Motor neuron (in vitro differentiated cells): ENCODE measurements at regions of chr11 and their contacts with region 1.

Region 1: GRCh38 chr11:85699957-85700741 is 14.2 kb upstream of the CCDC89 start:
- ATAC-seq: peak in 2 of 8 experiments; percentile 14 to 32
- H3K4me3 ChIP-seq: no peak overlapping the region
- H3K27ac ChIP-seq: no peak overlapping the region
- H3K4me1 ChIP-seq: no peaks in the 10 kb centered on the region

Region 2: DNA sequence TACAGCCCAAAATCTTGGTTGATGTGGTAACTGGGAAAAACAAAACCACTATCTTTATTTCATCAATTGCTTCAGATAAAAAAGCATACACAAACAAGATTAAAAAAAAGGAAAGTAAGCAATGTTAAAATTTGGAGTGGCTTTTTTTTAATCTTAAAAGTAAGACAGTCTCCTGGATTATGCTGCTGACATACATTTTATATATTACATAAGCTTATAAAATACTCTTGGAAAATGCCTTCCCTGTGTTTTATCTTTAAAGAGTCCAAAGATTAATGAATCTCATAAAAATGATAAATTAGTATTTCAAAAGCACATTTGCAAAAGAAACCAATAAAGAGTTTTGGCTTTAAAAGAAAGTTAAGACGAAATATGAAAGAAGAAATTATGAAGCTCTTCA is 205.8 kb before region 1 on chr11:
- in situ Hi-C with region 1: no loop called
- ATAC-seq: no peak
- H3K4me3 ChIP-seq: no peak overlapping the region
- H3K27ac ChIP-seq: no peak overlapping the region
- H3K4me1 ChIP-seq: no peaks in the 10 kb centered on the region

Region 3: GRCh38 chr11:85810871-85811611 is 110.9 kb after region 1 on chr11 and contains the start of gene SYTL2:
- in situ Hi-C with region 1: loop called in 1 of 9 experiments (anchors 10 kb)
- ATAC-seq: peak; percentile 91 to 97 (median 96)
- H3K4me3 ChIP-seq: peak within 1 kb of the TSS; percentile 34 to 50 (median 39)
- H3K27ac ChIP-seq: no peak within 1 kb of the TSS
- H3K4me1 ChIP-seq: no peaks in the 10 kb centered on the region
- total RNA-seq, gene SYTL2: 2.5 to 79.6 (median 19.3) TPM